A549 (cell line): ENCODE measurements at regions of chr2 and their contacts with region 1.

Region 1: DNA sequence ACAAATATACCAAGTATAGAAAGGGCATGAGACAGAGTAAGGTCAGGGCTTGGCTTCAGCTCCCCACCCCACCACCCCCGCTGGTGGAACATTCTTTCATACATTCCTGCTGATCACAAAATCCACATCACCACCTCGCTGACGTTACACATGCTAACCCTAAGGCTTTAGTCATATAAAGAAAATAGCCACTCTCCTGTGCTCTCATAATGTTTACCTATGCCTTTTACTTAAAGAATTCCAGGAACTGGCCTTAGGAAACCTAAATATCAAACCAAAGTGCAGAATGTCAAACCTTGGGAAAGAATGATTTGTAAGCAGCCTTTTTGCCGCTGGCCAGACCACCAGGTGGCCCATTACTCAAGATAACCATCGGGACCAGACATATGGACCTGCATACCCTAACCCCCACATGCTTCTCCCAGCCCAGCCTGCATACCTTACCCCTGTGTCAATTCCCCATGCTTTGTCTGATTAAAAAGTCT is 136.3 kb upstream of the SLC39A10 start:
- DNase-seq: peak; percentile 90 to 97
- ATAC-seq: peak; percentile 98 to 100
- H3K4me3 ChIP-seq: no peak overlapping the region
- H3K27ac ChIP-seq: peak overlapping the region; percentile 81 to 91
- H3K4me1 ChIP-seq: peaks cover 25% of the 10 kb centered on the region
- CTCF ChIP-seq: peak; percentile 41
- EP300 ChIP-seq: peak; percentile 91 to 96
- POLR2A ChIP-seq: no peak
- RAD21 ChIP-seq: peak; percentile 63 to 77

Region 2: GRCh38 chr2:195458936-195459335 is 61.8 kb before region 1 on chr2:
- CTCF ChIA-PET with region 1: no interaction called
- POLR2A ChIA-PET with region 1: no interaction called
- DNase-seq: no peak
- ATAC-seq: no peak
- H3K4me3 ChIP-seq: no peak overlapping the region
- H3K27ac ChIP-seq: no peak overlapping the region
- H3K4me1 ChIP-seq: no peaks in the 10 kb centered on the region
- CTCF ChIP-seq: no peak
- EP300 ChIP-seq: no peak
- POLR2A ChIP-seq: no peak
- RAD21 ChIP-seq: no peak

Region 3: GRCh38 chr2:195533771-195534642 is 13.3 kb after region 1 on chr2:
- CTCF ChIA-PET with region 1: interaction called, 3 read pairs
- POLR2A ChIA-PET with region 1: interaction called, 16 read pairs
- DNase-seq: peak; percentile 38 to 82
- ATAC-seq: peak; percentile 93 to 94
- H3K4me3 ChIP-seq: no peak overlapping the region
- H3K27ac ChIP-seq: peak overlapping the region; percentile 71 to 87
- H3K4me1 ChIP-seq: peaks cover 43% of the 10 kb centered on the region
- CTCF ChIP-seq: peak; percentile 41
- EP300 ChIP-seq: no peak
- POLR2A ChIP-seq: no peak
- RAD21 ChIP-seq: peak; percentile 12 to 31; a peak in 2 of 5 replicates